ENCODE measurements at regions of chr2 and their contacts with region 1.

Region 1: DNA sequence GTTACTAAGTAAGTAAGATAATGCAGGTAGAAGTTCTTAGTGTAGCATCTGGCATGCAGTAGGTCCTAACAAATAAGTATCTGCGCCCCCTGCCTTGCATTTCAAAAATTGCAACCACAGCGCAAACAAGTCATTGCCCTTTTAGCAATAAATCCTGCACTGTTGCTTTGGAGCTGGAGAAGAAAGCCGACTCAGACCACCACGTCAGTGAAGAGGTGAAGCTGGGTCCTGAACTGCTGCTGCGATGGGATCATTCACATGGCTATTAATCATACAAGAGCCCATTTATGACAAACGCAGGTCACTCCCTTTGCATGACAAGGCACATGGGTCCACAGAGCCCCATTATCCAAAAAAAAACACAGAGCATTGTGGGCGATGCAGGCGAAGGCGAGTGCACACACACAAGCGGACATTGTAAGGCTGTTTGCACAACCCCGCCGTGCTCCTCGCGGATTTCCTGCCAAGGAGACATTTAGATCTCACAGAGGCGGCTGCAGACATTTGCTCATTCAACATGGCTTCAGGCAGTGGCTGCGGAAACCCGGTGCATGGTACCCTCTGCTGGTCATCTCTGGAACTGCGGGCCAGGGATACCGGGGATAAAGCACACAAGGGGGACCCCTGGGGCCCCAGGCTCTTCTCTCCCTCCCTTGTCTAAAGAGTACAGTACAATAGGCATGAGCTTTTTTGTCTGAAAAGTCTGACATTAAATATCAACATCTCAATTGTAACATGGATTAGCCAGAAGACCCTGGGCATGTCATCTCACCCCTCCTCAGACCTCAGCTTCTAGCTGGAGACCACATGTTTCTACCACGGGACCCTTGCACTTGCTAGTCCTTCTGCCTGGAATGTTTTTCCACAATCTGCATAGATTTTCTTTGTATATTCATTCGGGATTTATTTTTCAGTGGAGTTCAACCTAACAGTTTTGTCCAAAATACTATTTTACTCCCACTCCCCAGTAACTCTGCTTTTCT is 56.7 kb downstream of the CYRIA start:
- DNase-seq: peak; percentile 86
- H3K4me3 Mint-ChIP-seq: peak overlapping the region; percentile 66
- H3K27ac Mint-ChIP-seq: no peak overlapping the region
- H3K4me1 Mint-ChIP-seq: peaks cover 5% of the 10 kb centered on the region
- H3K27me3 Mint-ChIP-seq: peaks cover under 1% of the 10 kb centered on the region

Region 2: GRCh38 chr2:16623031-16623430 is 14.1 kb after region 1 on chr2:
- CTCF ChIA-PET with region 1: interaction called, 17 read pairs
- POLR2A ChIA-PET with region 1: no interaction called
- DNase-seq: no peak
- H3K4me3 Mint-ChIP-seq: no peak overlapping the region
- H3K27ac Mint-ChIP-seq: no peak overlapping the region
- H3K4me1 Mint-ChIP-seq: peaks cover 33% of the 10 kb centered on the region
- H3K27me3 Mint-ChIP-seq: peaks cover 4% of the 10 kb centered on the region

Region 3: DNA sequence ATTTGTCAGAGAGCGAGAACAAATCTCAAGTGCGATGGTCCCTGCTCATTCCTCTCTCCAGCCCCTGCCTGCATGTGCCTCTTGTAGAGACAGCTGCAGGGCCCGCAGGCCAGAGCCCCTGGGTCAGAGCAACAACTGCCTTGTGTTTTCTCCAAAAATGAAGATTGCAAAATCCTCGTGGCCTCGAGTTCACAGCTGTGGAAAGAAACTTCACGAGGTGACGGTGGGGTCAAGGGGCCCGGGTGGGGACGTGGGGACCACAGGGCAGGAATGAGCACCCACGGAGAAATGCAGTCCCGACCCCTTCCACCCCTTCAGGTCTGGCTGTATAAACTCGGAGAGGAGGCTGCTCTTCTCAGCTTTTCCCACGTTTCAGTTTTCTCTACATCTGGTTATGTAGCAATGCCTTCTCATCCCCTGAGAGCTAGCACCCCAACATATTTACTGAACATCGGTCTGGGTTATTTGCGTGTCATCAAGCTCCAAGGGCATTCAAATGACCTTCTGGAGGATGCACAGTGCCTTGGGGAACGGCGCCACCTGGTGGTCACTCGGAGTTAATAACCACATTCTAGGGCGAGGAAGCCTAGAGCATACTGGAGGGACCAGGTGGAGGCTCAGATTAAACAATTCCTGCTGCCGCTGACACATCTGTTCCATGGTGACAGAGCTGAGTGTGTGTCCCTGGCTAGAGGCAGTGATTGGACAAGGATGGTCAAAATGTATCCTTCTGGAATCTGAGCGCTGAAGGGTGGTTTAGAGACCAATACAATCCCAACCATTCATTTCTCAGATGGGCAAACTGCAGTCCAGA is 148.1 kb after region 1 on chr2:
- CTCF ChIA-PET with region 1: interaction called, 18 read pairs
- POLR2A ChIA-PET with region 1: no interaction called
- DNase-seq: peak; percentile 66
- H3K4me3 Mint-ChIP-seq: no peak overlapping the region
- H3K27ac Mint-ChIP-seq: no peak overlapping the region
- H3K4me1 Mint-ChIP-seq: no peaks in the 10 kb centered on the region
- H3K27me3 Mint-ChIP-seq: no peaks in the 10 kb centered on the region

Measured in activated CD4-positive, alpha-beta memory T cell treated with anti-CD3 and anti-CD28 coated beads, Interleukin-2, amount 10 ng/mL, durations not matched to agents 7 days and 5 days (primary cell).